Mammary epithelial cell (primary cell): ENCODE measurements at regions of chr14 and their contacts with region 1.

Region 1: GRCh38 chr14:57863471-57863870 is 2.4 kb downstream of the SLC35F4 start:
- DNase-seq: no peak
- H3K4me3 ChIP-seq: no peak overlapping the region
- H3K27ac ChIP-seq: no peak overlapping the region
- H3K4me1 ChIP-seq: peaks cover 5% of the 10 kb centered on the region
- H3K27me3 ChIP-seq: peaks cover 34% of the 10 kb centered on the region
- CTCF ChIP-seq: no peak

Region 2: DNA sequence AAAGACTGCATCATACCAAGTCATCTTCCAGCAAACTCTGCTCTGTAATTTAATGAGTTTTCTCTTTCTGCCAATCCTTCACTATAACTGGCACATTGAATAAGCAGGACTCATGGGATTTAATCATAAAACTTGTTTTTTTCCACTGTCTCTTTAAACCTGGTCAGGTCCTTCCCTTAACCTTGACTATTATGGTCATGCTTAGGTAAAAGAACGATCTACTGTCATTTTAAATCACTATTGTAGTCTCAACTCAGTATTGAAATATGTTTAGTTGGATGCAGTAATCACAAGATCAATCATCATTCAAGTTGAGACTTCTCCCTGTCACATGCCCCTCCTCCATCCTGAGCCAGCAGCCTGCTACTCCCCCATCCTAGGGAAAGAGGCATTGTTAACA is 53.7 kb before region 1 on chr14:
- CTCF ChIA-PET with region 1: no interaction called
- dilution Hi-C with region 1: no loop called
- in situ Hi-C with region 1: no loop called
- intact Hi-C with region 1: no loop called
- DNase-seq: no peak
- H3K4me3 ChIP-seq: no peak overlapping the region
- H3K27ac ChIP-seq: no peak overlapping the region
- H3K4me1 ChIP-seq: no peaks in the 10 kb centered on the region
- H3K27me3 ChIP-seq: no peaks in the 10 kb centered on the region
- CTCF ChIP-seq: no peak

Region 3: GRCh38 chr14:58131386-58131785 is 267.9 kb after region 1 on chr14:
- CTCF ChIA-PET with region 1: interaction called, 18 read pairs
- dilution Hi-C with region 1: no loop called
- in situ Hi-C with region 1: no loop called
- intact Hi-C with region 1: no loop called
- DNase-seq: peak; percentile 25
- H3K4me3 ChIP-seq: no peak overlapping the region
- H3K27ac ChIP-seq: no peak overlapping the region
- H3K4me1 ChIP-seq: peaks cover 8% of the 10 kb centered on the region
- H3K27me3 ChIP-seq: no peaks in the 10 kb centered on the region
- CTCF ChIP-seq: no peak